ENCODE measurements at regions of chr3 and their contacts with region 1.

Region 1: GRCh38 chr3:42012935-42013690 is 51.2 kb upstream of the ULK4 start:
- DNase-seq: peak; percentile 97
- H3K4me3 ChIP-seq: peak overlapping the region; percentile 94
- H3K27ac ChIP-seq: peak overlapping the region; percentile 98
- H3K4me1 ChIP-seq: peaks cover 56% of the 10 kb centered on the region
- CTCF ChIP-seq: peak; percentile 29; the same call in 1 of the 2 replicates

Region 2: GRCh38 chr3:41893977-41894376 is 119.1 kb before region 1 on chr3:
- CTCF ChIA-PET with region 1: no interaction called
- POLR2A ChIA-PET with region 1: no interaction called
- intact Hi-C with region 1: loop called (anchors 2 kb)
- DNase-seq: peak; percentile 38
- H3K4me3 ChIP-seq: no peak overlapping the region
- H3K27ac ChIP-seq: no peak overlapping the region
- H3K4me1 ChIP-seq: peaks cover 9% of the 10 kb centered on the region
- CTCF ChIP-seq: peak; percentile 88

Region 3: DNA sequence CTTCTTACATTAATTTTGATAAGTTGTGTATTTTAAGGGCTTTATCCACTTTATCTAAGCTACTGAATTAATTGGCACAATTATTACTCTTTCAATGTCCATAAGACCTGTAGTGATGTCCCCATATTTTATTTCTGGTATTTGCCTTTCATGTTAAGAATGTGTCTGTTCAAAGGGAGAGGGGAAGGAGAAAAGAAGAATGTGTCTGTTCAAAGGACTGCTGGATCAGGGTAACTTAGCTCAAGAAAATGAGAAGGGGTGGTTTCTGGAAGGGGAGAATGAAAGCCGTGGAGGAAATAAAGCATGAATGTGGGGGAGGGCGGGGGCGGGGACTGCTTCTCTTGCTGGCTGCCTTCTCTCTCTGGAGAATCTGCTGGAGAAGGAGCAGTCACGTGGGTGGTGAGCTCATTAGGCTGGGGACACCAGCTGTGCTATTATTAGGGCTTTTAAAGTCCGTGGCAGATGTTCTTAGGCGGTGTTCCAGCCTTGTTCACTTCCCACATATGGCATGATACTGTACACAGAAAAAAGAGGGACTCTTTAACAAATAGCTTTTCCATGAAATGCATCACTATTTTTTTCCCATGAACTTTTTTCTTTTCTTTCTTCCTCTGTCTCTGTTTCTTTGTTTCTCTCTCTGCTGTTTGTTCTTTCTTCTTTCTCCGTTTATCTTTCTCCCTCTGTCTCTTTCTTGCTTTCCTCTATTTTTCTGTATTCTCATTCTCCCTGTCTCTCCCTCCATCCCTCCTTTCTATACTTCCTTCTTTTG is 12.4 kb after region 1 on chr3:
- CTCF ChIA-PET with region 1: interaction called, 3 read pairs
- POLR2A ChIA-PET with region 1: interaction called, 30 read pairs
- intact Hi-C with region 1: no loop called
- DNase-seq: peak; percentile 55
- H3K4me3 ChIP-seq: peak overlapping the region; percentile 47
- H3K27ac ChIP-seq: peak overlapping the region; percentile 40
- H3K4me1 ChIP-seq: peaks cover 59% of the 10 kb centered on the region
- CTCF ChIP-seq: no peak

Region 4: GRCh38 chr3:42057561-42058211 is 44.6 kb after region 1 on chr3:
- CTCF ChIA-PET with region 1: no interaction called
- POLR2A ChIA-PET with region 1: interaction called, 6 read pairs
- intact Hi-C with region 1: loop called (anchors 5 kb)
- DNase-seq: peak; percentile 57
- H3K4me3 ChIP-seq: peak overlapping the region; percentile 29
- H3K27ac ChIP-seq: peak overlapping the region; percentile 47
- H3K4me1 ChIP-seq: peaks cover 67% of the 10 kb centered on the region
- CTCF ChIP-seq: no peak

Region 5: GRCh38 chr3:42096796-42097565 is 83.9 kb after region 1 on chr3:
- CTCF ChIA-PET with region 1: interaction called, 4 read pairs
- POLR2A ChIA-PET with region 1: interaction called, 5 read pairs
- intact Hi-C with region 1: loop called (anchors 1 kb)
- DNase-seq: no peak
- H3K4me3 ChIP-seq: no peak overlapping the region
- H3K27ac ChIP-seq: no peak overlapping the region
- H3K4me1 ChIP-seq: peaks cover 31% of the 10 kb centered on the region
- CTCF ChIP-seq: no peak

Region 6: GRCh38 chr3:42403737-42404136 is 390.6 kb after region 1 on chr3:
- CTCF ChIA-PET with region 1: no interaction called
- POLR2A ChIA-PET with region 1: no interaction called
- intact Hi-C with region 1: no loop called
- DNase-seq: no peak
- H3K4me3 ChIP-seq: no peak overlapping the region
- H3K27ac ChIP-seq: no peak overlapping the region
- H3K4me1 ChIP-seq: no peaks in the 10 kb centered on the region
- CTCF ChIP-seq: no peak

Region 7: GRCh38 chr3:42590989-42591756 is 578.1 kb after region 1 on chr3:
- CTCF ChIA-PET with region 1: no interaction called
- POLR2A ChIA-PET with region 1: no interaction called
- intact Hi-C with region 1: loop called (anchors 10 kb)
- DNase-seq: peak; percentile 25
- H3K4me3 ChIP-seq: peak overlapping the region; percentile 95
- H3K27ac ChIP-seq: peak overlapping the region; percentile 62
- H3K4me1 ChIP-seq: peaks cover 26% of the 10 kb centered on the region
- CTCF ChIP-seq: no peak

Measured in OCI-LY7 (cell line).